Breast epithelium (tissue), 4 donors: ENCODE measurements at regions of chr3 and their contacts with region 1.

Region 1: GRCh38 chr3:32296256-32297204 is 58.0 kb downstream of the CMTM8 start:
- DNase-seq: peak; percentile 44 to 62
- H3K4me3 ChIP-seq: no peak overlapping the region
- H3K27ac ChIP-seq: no peak overlapping the region
- H3K4me1 ChIP-seq: no peaks in the 10 kb centered on the region
- H3K27me3 ChIP-seq: no peaks in the 10 kb centered on the region
- CTCF ChIP-seq: peak; percentile 63 to 89 (median 82)
- POLR2A ChIP-seq: no peak

Region 2: DNA sequence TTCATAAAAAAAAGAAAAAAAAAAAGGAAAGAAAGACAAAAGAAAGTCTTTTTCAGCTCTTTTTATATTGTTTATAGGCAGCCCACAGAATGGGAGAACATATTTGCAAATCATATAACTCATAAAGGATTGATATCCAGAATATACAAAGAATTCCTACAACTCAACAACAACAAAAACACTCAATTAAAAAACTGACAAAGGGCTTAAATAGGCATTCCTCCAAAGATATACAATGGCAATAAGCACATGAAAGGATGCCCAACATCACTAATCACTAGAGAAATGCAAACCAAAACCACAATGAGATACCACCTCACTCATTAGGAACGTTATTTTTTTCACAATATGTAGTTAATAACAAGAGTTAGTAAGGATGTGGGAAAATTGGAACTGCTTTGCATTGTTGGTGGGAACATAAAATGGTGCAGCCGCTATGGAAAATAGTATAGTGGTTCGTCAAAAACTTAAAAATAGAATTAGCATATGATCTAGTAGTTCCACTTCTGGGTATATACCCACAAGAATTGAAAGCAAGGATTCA is 112.3 kb before region 1 on chr3:
- intact Hi-C with region 1: loop called (anchors 10 kb)
- DNase-seq: no peak
- H3K4me3 ChIP-seq: no peak overlapping the region
- H3K27ac ChIP-seq: no peak overlapping the region
- H3K4me1 ChIP-seq: no peaks in the 10 kb centered on the region
- H3K27me3 ChIP-seq: no peaks in the 10 kb centered on the region
- CTCF ChIP-seq: no peak
- POLR2A ChIP-seq: no peak